Mammary epithelial cell (primary cell): ENCODE measurements at regions of chr13 and their contacts with region 1.

Region 1: GRCh38 chr13:44577236-44578066 is 1.3 kb upstream of the TSC22D1 start:
- DNase-seq: peak; percentile 93
- H3K4me3 ChIP-seq: peak overlapping the region; percentile 82 to 88 (median 85)
- H3K27ac ChIP-seq: peak overlapping the region; percentile 83
- H3K4me1 ChIP-seq: peaks cover 36% of the 10 kb centered on the region
- H3K27me3 ChIP-seq: no peaks in the 10 kb centered on the region
- CTCF ChIP-seq: no peak

Region 2: DNA sequence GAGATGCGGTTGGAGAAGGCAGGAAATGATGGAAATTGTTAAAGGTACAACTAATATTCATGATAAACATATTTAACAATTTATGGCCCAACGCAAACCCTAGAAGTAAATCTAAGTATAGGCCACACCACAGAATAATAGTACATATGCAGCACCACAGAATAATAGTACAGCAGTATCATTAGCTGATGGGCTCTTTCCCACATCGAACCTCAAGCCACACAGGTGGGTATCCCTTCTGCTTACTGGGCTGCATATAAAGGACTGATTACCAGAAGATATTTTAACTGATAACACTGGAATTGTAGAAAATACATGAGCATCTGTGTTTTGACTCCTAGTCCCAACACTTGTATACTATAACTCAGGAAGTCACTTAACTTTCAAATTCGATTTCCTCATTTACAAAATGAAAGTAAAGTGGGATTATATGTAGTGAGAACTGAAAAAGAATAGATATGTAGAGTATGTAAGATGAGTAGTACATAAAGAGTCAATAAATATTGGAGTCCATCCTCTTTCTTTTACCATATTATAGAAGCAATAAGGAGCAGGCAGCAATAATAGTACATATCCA is 92.8 kb before region 1 on chr13:
- CTCF ChIA-PET with region 1: no interaction called
- dilution Hi-C with region 1: no loop called
- in situ Hi-C with region 1: no loop called
- intact Hi-C with region 1: loop called (anchors 2 kb)
- DNase-seq: no peak
- H3K4me3 ChIP-seq: no peak overlapping the region
- H3K27ac ChIP-seq: no peak overlapping the region
- H3K4me1 ChIP-seq: no peaks in the 10 kb centered on the region
- H3K27me3 ChIP-seq: no peaks in the 10 kb centered on the region
- CTCF ChIP-seq: no peak

Region 3: DNA sequence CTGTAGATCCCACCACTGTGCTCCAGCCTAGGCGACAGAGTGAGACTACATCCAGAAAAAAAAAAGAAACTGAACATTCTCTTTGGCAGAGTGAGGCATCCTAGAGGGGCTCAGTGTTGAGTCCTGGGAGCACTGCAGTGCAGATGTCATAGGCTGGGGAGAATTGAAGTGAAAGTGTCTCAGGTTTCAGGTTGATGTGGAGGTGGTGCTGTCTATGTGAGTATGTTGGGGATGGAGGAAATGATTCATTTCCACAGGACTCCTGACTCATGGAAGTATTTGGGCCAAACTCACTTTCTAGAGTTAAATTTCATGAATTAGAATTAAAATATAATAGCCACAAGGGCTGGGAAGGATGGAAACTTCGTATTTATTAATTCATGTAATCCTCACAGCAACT is 133.1 kb after region 1 on chr13:
- CTCF ChIA-PET with region 1: no interaction called
- dilution Hi-C with region 1: no loop called
- in situ Hi-C with region 1: no loop called
- intact Hi-C with region 1: loop called (anchors 1 kb)
- DNase-seq: peak; percentile 91
- H3K4me3 ChIP-seq: no peak overlapping the region
- H3K27ac ChIP-seq: peak overlapping the region; percentile 94
- H3K4me1 ChIP-seq: peaks cover 54% of the 10 kb centered on the region
- H3K27me3 ChIP-seq: no peaks in the 10 kb centered on the region
- CTCF ChIP-seq: no peak

Region 4: DNA sequence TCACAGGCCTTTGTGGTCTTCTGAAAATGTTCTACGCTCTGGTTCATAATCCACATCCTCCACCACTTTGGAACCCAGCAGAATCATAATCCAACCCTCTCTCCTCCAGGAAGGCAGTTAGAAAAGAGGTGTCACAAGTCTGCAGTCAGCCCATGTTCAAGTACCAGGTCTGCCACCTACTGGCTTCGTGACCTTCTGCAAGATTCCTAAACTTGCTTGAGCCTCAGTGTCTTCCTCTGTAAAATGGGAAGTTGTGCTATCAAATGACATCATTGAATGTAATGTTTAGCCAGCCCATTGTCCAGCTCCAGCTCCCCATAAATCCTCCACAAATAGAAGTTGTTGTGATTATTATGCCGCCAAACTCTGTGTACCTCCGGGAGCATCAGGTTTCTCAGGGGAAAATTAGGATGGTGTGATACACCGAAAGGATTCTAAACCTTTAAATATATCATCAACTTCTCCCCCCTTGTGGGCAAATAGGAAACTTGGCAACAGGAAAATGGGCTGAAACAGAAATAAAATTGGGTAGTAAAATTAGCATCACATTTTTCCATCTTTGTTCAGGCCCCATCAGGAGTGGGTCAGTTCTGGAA is 302.1 kb after region 1 on chr13:
- CTCF ChIA-PET with region 1: no interaction called
- dilution Hi-C with region 1: no loop called
- in situ Hi-C with region 1: no loop called
- intact Hi-C with region 1: loop called (anchors 2 kb)
- DNase-seq: peak; percentile 41
- H3K4me3 ChIP-seq: no peak overlapping the region
- H3K27ac ChIP-seq: no peak overlapping the region
- H3K4me1 ChIP-seq: no peaks in the 10 kb centered on the region
- H3K27me3 ChIP-seq: no peaks in the 10 kb centered on the region
- CTCF ChIP-seq: peak; percentile 56 to 65

Region 5: DNA sequence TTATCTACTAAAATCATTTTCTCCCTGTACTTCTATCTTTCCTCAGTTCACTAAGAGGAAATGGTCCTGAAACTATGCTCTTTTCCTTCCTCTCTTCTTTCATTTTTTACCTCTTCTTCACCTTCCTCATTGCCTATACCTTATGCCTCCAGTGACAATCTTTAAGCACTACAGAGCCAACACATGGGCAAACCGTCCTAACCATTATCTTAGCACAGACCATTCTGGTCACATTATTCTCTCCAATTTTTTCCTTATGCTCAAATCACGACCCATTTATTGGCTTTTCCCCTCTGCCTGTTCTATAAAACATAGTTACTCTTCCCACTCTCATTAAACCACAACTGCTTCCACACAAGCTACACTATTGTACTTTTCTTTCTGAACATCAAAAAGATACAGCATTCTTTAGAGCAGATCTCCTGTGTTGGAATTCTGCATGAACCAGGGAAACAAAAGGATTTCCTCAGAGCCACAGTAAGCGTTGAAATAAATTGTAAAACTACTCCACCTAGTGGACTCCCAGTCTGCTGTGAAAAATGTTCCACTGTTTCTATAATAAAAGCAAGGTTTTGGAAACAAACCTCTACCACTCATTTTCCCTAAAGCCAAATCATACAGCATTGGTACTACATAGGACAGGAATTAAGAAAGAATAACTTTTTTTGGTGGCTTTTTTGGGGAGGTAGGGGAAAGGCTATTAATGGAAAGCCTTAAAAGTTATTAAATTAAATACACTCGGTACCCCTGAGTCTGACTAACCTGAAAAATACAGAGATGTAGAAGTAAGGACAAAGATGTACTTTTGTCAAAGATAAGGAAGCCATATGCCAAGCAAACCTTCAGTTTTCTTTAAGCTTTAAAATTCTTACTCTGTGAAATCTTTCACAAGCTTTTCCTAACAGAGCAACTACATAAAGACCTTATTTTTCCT is 392.4 kb after region 1 on chr13:
- CTCF ChIA-PET with region 1: no interaction called
- dilution Hi-C with region 1: no loop called
- in situ Hi-C with region 1: no loop called
- intact Hi-C with region 1: loop called (anchors 10 kb)
- DNase-seq: peak; percentile 28
- H3K4me3 ChIP-seq: no peak overlapping the region
- H3K27ac ChIP-seq: no peak overlapping the region
- H3K4me1 ChIP-seq: peaks cover 3% of the 10 kb centered on the region
- H3K27me3 ChIP-seq: no peaks in the 10 kb centered on the region
- CTCF ChIP-seq: peak; percentile 68 to 72